ENCODE measurements at regions of chr2 and their contacts with region 1.

Region 1: DNA sequence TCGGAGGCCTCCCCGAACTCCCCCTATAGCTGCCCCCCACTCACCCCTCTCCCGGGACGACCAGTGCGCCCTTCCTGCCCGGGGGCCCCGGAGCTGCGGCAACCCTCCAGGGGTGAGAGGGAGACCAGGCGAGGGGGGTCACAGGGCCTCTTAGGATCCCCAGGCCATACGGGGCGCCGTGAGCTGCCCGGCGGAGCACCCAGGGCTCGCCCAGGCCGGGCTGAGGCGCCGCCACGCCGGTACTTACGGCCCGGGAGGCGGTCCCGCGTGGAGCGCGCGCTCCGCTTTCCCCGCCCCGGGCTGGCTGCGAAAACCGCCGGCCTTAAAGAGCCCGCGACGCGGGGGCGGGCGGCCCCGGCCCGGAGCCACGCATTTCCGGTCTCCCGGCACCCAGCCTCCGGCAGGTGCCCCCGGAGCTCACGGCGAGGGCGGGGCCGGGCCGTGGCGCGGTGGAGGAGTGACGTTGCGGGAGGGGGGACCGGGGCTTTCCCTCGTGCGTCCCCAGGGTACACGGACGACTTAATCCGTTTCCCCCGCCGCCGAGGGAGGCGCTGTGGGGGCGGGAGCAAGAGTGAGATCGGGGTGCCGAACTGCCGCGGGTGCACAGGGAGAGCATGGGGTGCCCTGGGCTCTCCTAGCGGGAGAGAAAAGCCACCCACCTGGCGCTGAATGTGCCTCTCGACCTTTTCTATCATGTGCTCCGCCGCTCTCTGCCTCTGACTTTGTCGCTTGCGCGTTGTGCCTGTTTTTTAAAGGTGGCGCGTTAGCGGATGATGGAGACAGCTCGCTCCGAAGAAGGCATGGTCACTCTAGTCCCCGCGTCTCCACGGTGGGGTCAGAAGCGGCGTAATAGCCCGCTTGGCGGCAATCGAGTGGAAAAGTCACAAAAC is at the start of gene METTL21A:
- DNase-seq: peak; percentile 90 to 95
- ATAC-seq: peak; percentile 94
- H3K4me3 ChIP-seq: peak within 1 kb of the TSS; percentile 85 to 90
- H3K27ac ChIP-seq: peak within 1 kb of the TSS; percentile 29 to 73
- H3K4me1 ChIP-seq: no peaks in the 10 kb centered on the region
- H3K27me3 ChIP-seq: no peaks in the 10 kb centered on the region
- total RNA-seq, gene METTL21A: 6.7 to 11.1 TPM

Region 2: GRCh38 chr2:207265869-207266268 is 359.4 kb before region 1 on chr2:
- intact Hi-C with region 1: no loop called
- DNase-seq: no peak
- ATAC-seq: no peak
- H3K4me3 ChIP-seq: no peak overlapping the region
- H3K27ac ChIP-seq: no peak overlapping the region
- H3K4me1 ChIP-seq: no peaks in the 10 kb centered on the region
- H3K27me3 ChIP-seq: no peaks in the 10 kb centered on the region

Region 3: GRCh38 chr2:207484444-207485391 is 140.5 kb before region 1 on chr2:
- intact Hi-C with region 1: loop called in 1 of 2 experiments (anchors 5 kb)
- DNase-seq: no peak
- ATAC-seq: no peak
- H3K4me3 ChIP-seq: no peak overlapping the region
- H3K27ac ChIP-seq: peak overlapping the region in 1 of 2 donors; percentile 48
- H3K4me1 ChIP-seq: peaks cover 5 to 8% of the 10 kb centered on the region in 2 donors
- H3K27me3 ChIP-seq: no peaks in the 10 kb centered on the region

Region 4: GRCh38 chr2:207529330-207530159 is 95.7 kb before region 1 on chr2 and contains the start of gene CREB1:
- intact Hi-C with region 1: loop called in 1 of 2 experiments (anchors 5 kb)
- DNase-seq: peak; percentile 99 to 100
- ATAC-seq: peak; percentile 99
- H3K4me3 ChIP-seq: peak within 1 kb of the TSS; percentile 96 to 100
- H3K27ac ChIP-seq: peak within 1 kb of the TSS; percentile 99 to 100
- H3K4me1 ChIP-seq: peaks cover 0 to 3% of the 10 kb centered on the region in 2 donors
- H3K27me3 ChIP-seq: no peaks in the 10 kb centered on the region
- total RNA-seq, gene CREB1: 62.0 to 88.7 TPM

Region 5: GRCh38 chr2:207710814-207711740 is 85.8 kb after region 1 on chr2 and contains the start of gene CCNYL1:
- intact Hi-C with region 1: loop called (anchors 2 kb)
- DNase-seq: peak; percentile 100
- ATAC-seq: peak; percentile 100
- H3K4me3 ChIP-seq: peak within 1 kb of the TSS; percentile 57 to 81
- H3K27ac ChIP-seq: peak within 1 kb of the TSS; percentile 88 to 90
- H3K4me1 ChIP-seq: no peaks in the 10 kb centered on the region
- H3K27me3 ChIP-seq: no peaks in the 10 kb centered on the region
- total RNA-seq, gene CCNYL1: 22.4 to 37.1 TPM

Region 6: DNA sequence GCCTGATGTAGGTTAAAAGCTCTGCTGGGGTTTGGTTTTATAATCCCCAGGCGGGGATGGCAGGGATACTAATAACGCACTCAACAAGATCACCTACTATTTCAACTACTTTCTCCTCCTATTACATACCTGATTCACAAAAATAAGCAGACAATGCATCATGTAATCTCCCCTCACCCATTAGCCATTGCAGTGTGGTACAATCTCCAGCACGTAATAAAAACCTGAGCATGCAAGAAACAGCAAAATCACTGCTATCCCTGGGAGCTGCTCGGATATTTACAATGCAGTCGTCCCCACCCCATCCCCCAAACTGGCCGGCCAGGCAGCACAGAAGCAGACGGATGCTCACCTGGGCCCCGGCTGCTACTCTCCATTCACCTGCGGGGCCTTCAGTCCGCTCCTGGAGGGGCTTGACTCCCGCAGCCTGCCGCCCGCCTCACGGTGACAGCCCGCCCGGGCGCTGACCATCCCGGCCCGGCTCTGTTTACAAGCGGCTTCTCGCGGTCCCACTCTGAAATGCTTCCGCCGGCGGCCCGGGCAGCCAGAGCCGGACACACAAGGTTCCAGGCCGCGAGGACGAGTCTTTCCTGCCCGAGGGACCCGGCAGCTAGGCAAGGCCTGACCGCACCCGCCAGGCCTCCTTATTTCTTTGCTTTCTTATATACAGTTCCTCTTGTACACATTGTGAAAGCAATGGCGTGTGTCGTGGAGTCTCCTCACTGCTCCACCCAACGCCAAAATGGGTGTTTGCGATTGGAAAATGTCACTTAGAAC is 400.0 kb after region 1 on chr2 and contains the start of gene PLEKHM3:
- intact Hi-C with region 1: loop called in 1 of 2 experiments (anchors 10 kb)
- DNase-seq: peak; percentile 90 to 95
- ATAC-seq: peak; percentile 97
- H3K4me3 ChIP-seq: peak within 1 kb of the TSS; percentile 76 to 94
- H3K27ac ChIP-seq: peak within 1 kb of the TSS in 1 of 2 donors; percentile 50
- H3K4me1 ChIP-seq: no peaks in the 10 kb centered on the region
- H3K27me3 ChIP-seq: no peaks in the 10 kb centered on the region
- total RNA-seq, gene PLEKHM3: 12.4 to 18.9 TPM

Region 7: GRCh38 chr2:208072250-208072892 is 447.1 kb after region 1 on chr2:
- intact Hi-C with region 1: loop called in 1 of 2 experiments (anchors 10 kb)
- DNase-seq: peak in 1 of 2 donors; percentile 63
- ATAC-seq: peak; percentile 83
- H3K4me3 ChIP-seq: no peak overlapping the region
- H3K27ac ChIP-seq: no peak overlapping the region
- H3K4me1 ChIP-seq: no peaks in the 10 kb centered on the region
- H3K27me3 ChIP-seq: no peaks in the 10 kb centered on the region